ENCODE measurements at regions of chr1 and their contacts with region 1.

Region 1: GRCh38 chr1:43414634-43415223 is 25.0 kb downstream of the SZT2 start:
- DNase-seq: peak in 4 of 10 donors; percentile 20 to 58 (median 42)

Region 2: DNA sequence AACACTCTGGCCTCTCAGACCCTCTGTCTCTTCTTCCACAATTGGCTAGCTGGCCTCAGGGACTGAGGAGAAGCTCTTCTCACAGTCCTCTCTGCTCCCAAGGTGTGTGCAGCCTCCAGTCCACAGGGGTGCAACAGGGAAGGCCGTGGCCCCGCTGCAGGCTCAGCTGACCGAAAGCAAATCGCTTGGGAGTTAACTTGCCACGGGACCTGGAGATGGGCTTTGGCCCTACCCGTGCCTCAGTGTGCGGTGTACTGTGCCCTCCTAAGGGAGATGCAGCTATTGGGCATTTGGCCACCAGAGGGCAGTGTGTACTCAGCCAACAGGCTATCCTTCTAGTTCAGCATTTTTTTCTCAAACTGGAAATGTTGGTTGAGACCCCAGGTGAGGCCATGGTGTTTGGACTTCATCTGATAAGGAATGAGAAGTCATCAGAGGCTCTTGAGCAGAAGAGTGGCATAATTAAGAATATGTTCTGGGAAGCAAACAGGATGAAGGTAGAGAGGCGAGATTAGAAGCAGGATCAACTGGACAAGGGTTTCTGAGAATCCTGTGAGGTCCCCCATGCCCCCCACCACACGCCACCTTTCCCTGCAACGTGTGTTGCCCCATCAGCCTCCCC is 187.5 kb before region 1 on chr1:
- intact Hi-C with region 1: loop called (anchors 1 kb)
- DNase-seq: peak; percentile 66 to 97 (median 92)

Region 3: DNA sequence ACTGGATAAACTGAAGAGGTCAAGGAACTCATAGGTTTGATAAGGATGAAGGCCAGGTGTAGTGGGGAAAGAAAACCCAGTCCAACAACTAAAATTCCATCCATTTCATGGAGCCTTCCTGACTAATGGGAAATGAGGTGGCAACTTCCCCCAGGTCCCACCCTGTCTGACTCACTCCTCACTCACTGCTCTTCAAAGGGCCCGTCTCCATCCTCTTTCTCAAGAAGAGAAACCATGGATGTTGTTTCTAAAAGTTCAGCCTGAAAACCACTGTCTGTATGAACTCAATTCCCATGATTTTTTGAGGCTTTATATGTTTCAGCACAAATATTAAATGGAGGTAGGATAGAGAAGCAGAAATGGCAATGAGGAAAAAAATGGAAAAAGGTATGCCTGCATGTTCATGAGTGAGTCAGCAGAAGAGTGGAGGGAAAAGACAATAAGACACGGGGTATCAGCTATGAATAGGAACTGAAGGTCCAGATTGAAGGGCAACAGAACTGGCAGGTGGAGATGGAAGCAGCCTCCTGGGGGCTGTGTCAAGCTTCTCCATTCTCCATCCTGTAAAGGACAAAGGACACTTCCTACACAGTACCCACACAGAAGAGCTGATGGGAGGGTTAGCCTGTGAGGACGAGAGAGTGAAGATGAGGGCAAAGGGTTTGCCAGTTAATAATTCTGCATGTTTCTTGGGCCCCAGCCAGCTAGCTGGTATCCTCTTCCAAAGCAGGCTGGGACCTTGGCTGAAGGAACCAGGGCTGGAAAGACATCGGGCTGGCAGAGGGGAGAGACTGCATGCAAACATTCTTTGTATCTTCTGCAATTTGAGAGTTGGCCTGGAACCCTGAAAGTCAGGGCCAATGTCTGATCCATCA is 41.4 kb before region 1 on chr1:
- intact Hi-C with region 1: no loop called
- DNase-seq: no peak

Measured in posterior cingulate gyrus (tissue), 11 donors.